ENCODE measurements at regions of chr7 and their contacts with region 1.

Region 1: GRCh38 chr7:23622506-23622925 is 25.3 kb downstream of the CCDC126 start:
- DNase-seq: no peak
- H3K4me3 ChIP-seq: no peak overlapping the region
- H3K27ac ChIP-seq: no peak overlapping the region
- H3K4me1 ChIP-seq: no peaks in the 10 kb centered on the region
- H3K27me3 ChIP-seq: no peaks in the 10 kb centered on the region
- CTCF ChIP-seq: no peak
- EP300 ChIP-seq: no peak
- POLR2A ChIP-seq: no peak

Region 2: DNA sequence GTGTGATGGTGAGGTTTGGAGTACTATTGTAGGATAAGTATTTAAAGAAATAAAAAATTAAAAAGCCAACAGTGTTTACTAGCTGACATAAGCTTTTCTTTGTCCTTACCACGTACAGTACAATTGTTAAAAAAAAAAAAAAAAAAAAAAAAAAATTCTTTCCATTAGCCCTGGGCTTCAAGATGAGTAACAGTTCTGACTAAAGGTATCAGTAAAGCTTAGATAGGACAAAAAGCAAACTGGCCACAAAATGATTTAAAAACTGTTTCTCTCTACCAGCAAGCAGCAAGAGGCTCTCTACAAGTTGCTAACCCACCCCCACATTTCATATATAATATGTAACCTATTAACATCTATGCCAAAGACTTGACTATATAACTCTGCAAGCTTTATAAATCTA is 626.0 kb before region 1 on chr7:
- intact Hi-C with region 1: no loop called
- DNase-seq: no peak
- H3K4me3 ChIP-seq: no peak overlapping the region
- H3K27ac ChIP-seq: no peak overlapping the region
- H3K4me1 ChIP-seq: no peaks in the 10 kb centered on the region
- H3K27me3 ChIP-seq: no peaks in the 10 kb centered on the region
- CTCF ChIP-seq: no peak
- EP300 ChIP-seq: no peak
- POLR2A ChIP-seq: no peak

Region 3: DNA sequence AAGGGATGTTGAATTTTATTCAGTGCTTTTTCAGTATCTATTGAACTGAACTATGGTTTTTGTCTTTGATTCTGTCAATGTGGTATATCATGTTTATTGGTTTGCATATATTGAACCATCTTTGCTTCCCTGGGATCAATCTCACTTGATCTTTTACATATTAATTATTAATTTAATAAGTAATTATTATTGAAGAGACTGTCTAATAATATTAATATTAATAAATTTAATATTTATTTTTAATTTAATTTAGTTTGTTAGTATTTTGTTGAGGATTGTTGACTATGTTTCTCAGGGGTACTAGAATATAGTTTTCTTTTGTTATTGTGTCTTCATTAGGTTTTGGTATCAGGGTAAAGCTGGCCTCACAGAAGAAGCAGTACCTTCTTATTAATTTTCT is 64.2 kb before region 1 on chr7:
- intact Hi-C with region 1: loop called in 1 of 4 experiments (anchors 2 kb)
- DNase-seq: no peak
- H3K4me3 ChIP-seq: no peak overlapping the region
- H3K27ac ChIP-seq: no peak overlapping the region
- H3K4me1 ChIP-seq: no peaks in the 10 kb centered on the region
- H3K27me3 ChIP-seq: no peaks in the 10 kb centered on the region
- CTCF ChIP-seq: no peak
- EP300 ChIP-seq: no peak
- POLR2A ChIP-seq: no peak

Measured in ovary (tissue), 10 donors.